A549 (cell line): ENCODE measurements at regions of chr3 and their contacts with region 1.

Region 1: GRCh38 chr3:56484122-56484521 is 15.9 kb upstream of the ERC2 start:
- DNase-seq: no peak
- ATAC-seq: no peak
- H3K4me3 ChIP-seq: no peak overlapping the region
- H3K27ac ChIP-seq: no peak overlapping the region
- H3K4me1 ChIP-seq: no peaks in the 10 kb centered on the region
- CTCF ChIP-seq: no peak
- EP300 ChIP-seq: no peak
- POLR2A ChIP-seq: no peak
- RAD21 ChIP-seq: no peak

Region 2: DNA sequence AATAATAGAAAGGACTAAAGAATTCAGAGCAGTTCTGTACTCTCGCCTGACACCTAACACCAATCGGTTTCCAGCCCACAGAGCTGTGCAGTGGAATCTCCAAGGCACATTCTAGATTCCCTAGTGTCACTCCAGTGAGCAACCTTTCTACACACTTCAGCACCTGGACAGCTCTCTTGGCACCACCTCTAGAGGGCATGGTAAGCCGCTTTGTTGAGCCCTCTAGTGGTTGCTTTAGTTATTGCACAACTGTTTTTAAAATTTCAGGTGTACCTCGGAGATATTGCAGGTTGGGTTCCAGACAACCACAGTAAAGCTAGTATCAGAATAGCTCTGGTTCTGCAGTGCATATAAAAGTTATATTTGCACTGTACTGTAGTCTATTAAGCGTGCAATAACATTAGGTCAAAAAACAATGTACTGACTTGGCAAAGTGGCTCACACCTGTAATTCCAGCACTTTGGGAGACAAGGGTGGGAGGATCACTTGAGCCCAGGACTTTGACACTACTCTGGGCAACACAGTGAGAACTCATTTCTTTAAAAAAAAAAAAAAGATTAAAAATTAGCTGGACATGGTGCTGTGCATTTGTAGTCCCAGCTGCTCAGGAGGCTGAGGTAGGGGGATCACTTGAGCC is 10.7 kb after region 1 on chr3:
- CTCF ChIA-PET with region 1: interaction called, 15 read pairs
- POLR2A ChIA-PET with region 1: no interaction called
- DNase-seq: peak; percentile 62 to 78
- ATAC-seq: peak; percentile 89 to 93
- H3K4me3 ChIP-seq: no peak overlapping the region
- H3K27ac ChIP-seq: no peak overlapping the region
- H3K4me1 ChIP-seq: no peaks in the 10 kb centered on the region
- CTCF ChIP-seq: peak; percentile 76
- EP300 ChIP-seq: no peak
- POLR2A ChIP-seq: no peak
- RAD21 ChIP-seq: peak; percentile 51 to 52